Lower leg skin (tissue), 4 donors: ENCODE measurements at regions of chr6 and their contacts with region 1.

Region 1: GRCh38 chr6:56637640-56638039 is 5.0 kb downstream of the DST start:
- DNase-seq: no peak
- H3K4me3 ChIP-seq: no peak overlapping the region
- CTCF ChIP-seq: peak in 1 of 3 donors; percentile 45
- POLR2A ChIP-seq: no peak

Region 2: DNA sequence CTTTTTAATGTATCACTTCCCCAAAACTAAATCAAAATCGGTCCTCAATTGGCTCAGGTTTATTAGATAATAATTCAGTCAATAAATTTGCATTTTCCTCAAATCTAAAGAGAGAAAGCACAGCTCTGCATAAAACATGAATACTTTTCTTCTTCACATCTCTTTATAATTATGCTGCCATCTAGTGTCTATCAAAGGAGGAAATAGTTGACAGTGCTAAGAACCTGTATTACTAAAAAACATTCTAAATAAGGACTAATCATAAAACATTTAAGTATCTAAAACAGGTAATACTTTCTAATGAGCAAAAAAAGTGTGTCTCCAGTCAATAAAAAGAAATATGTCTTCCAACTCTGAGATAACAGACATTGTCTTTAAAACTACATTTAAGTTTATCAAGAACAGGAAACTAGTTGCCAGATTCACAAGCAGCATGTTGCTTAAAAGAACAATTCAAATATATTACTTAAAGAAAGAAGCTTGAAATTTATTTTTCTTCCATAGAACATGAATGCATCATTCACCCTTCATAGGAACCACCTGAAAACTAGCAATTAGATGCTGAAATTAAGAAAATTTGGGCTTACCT is 61.5 kb after region 1 on chr6:
- intact Hi-C with region 1: loop called (anchors 10 kb)
- DNase-seq: no peak
- H3K4me3 ChIP-seq: no peak overlapping the region
- CTCF ChIP-seq: no peak
- POLR2A ChIP-seq: no peak

Region 3: DNA sequence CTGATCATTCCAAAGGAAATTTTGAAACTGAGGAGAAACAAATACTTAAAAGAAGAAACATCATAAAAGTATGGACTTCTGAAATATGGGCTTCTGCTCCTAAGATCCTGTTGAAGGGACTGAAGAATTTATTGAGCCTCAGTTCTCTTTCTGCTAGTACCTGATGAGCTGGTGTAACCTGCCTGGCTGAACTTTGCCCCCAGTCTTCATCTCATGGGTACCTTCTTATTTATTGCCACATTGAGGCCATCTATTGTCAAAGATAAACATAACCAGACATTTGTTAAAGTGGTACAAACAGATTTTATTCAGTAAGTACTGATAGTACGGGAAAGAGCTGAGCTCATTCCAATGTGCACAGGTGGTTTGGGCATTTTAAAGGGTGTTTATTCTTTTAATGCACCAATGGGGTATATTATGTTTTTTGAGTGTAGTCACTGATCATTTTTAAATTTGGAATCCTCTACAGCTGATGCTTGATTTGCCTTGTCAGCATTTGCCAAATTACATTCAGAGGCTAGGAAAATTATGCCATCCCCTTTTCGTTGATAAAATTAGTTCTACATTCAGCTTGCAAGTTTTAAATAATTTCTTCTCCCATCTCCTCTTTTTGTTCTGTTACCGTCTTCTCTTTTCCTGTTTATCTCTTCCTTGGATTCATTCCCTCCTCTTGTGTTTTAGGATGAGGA is 798.0 kb after region 1 on chr6:
- intact Hi-C with region 1: loop called (anchors 5 kb)
- DNase-seq: no peak
- H3K4me3 ChIP-seq: no peak overlapping the region
- CTCF ChIP-seq: no peak
- POLR2A ChIP-seq: no peak